Posterior vena cava (tissue), 2 donors: ENCODE measurements at regions of chr4 and their contacts with region 1.

Region 1: DNA sequence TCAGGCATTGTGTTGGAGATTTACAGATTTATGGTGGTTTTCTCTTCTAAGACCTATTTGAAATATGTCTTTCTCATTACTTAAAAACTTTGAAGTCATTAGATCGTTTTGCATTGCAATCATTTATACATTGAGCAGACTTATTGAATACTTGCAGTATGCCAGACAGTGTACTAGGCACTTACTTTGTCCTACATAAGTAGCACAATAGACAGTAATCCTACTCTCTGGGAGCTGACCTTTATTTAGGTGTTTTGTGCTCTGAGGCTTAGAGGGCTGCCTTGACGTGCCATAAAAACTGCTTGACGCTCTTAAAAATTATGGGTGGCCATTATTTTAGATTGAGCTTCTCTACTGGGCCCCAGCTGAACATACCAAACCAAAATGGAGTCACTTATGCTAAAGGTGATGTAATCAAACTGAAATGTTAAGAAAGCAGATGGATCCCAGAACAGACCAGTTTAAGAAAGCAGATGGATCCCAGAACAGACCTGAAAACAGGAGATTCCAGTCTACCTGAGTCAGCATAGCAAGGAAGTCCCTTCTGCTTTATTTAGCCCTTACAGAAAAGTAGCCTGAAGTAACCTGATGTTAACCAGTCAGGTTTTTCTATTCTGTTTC is 42.4 kb downstream of the PTTG2 start:
- DNase-seq: no peak

Region 2: DNA sequence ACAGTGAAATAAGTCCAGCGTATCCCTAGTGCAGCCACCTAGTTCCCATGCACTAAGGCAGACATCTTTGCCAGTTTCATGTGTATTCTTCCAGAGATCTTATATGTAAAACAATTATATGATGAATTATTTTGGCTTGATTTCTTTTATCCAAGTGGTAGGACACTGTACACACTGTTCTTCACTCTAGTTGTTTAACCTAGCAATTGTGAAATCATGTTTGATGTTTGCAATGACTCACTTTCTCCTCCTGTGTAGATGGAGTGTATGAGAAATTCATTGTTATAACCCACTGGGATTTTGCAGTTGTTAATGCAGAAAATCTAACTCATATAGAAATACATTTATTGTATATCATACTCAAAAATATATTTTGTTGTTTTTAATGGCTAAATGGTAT is 129.2 kb before region 1 on chr4:
- intact Hi-C with region 1: loop called in 1 of 2 experiments (anchors 10 kb)
- DNase-seq: no peak

Region 3: DNA sequence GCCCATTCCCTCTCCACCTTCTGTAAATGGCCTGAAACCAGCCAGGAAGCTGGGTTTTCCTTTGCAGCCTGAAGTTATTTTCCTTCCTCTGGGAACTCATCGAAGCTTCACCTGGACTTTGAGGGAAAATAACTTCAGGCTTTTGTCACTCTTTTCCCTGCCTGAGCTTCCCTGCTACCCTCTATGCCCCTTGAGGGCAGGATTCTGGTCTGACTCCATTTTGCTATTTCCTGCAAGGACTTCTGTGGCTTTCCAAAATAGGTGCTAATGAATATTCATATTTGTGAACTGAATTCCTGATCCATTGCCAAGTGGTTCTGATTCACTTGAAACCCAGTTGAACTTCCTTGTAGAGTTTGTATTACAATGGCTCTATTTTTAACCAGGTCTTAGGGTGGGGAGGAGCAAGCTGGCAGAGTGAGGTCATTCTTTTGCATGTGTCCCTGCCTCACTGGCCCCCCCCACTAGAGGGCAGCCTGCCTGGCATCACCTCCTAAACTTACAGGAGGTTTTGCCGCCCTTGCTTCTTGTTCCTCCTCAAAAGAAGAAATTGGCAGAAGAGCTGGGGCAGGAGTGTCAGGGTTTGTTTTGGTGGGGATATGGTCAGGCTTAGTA is 32.0 kb before region 1 on chr4:
- intact Hi-C with region 1: no loop called
- DNase-seq: peak; percentile 93

Region 4: DNA sequence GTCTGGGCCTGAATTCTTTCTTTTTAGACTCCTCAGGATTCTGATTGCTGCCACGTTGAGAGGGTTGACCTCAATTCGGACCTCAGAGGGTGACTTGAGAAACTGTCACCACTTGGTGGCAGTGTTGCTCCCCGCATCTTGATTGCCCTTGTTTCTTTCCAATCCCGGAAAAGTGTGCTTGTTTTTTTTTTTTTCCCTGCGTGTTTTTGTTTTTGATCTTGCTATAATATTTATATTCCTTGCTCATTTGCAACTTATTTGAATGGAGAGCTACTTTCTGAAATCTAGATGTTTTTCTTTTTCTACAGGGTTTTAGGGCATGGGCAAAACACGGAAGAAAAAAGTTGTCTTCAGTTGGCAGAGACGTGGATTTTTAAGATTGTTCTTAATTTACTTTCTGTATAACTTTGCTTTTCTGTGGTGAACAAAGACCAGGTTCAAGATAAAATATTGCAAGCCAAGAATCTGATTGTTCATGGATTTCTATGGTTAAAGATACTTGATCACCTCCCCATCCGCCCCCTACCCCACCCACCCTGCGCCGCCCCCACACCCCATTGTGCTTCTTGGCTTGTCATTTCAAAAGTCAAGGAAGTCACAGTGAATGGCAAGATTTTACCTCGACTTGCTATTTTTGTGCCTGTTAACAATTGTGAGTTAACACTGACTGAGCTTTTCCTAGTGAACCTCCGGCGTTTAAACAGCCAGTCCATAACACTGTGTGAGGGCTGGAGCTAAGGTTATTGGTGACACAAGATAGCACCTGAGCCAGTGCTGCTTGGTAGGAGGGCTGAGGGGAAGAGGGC is 59.7 kb after region 1 on chr4:
- intact Hi-C with region 1: no loop called
- DNase-seq: peak; percentile 89